ENCODE measurements at regions of chr12 and their contacts with region 1.

Region 1: GRCh38 chr12:126772171-126772864 is 1494.7 kb upstream of the TMEM132C start:
- DNase-seq: peak; percentile 37
- H3K4me3 Mint-ChIP-seq: peak overlapping the region; percentile 62
- H3K27ac Mint-ChIP-seq: peak overlapping the region; percentile 83
- H3K4me1 Mint-ChIP-seq: peaks cover 19% of the 10 kb centered on the region
- H3K27me3 Mint-ChIP-seq: peaks cover 5% of the 10 kb centered on the region

Region 2: GRCh38 chr12:126397071-126397581 is 375.2 kb before region 1 on chr12:
- CTCF ChIA-PET with region 1: no interaction called
- intact Hi-C with region 1: loop called (anchors 1 kb)
- DNase-seq: peak; percentile 22
- H3K4me3 Mint-ChIP-seq: no peak overlapping the region
- H3K27ac Mint-ChIP-seq: no peak overlapping the region
- H3K4me1 Mint-ChIP-seq: peaks cover 11% of the 10 kb centered on the region
- H3K27me3 Mint-ChIP-seq: no peaks in the 10 kb centered on the region

Region 3: DNA sequence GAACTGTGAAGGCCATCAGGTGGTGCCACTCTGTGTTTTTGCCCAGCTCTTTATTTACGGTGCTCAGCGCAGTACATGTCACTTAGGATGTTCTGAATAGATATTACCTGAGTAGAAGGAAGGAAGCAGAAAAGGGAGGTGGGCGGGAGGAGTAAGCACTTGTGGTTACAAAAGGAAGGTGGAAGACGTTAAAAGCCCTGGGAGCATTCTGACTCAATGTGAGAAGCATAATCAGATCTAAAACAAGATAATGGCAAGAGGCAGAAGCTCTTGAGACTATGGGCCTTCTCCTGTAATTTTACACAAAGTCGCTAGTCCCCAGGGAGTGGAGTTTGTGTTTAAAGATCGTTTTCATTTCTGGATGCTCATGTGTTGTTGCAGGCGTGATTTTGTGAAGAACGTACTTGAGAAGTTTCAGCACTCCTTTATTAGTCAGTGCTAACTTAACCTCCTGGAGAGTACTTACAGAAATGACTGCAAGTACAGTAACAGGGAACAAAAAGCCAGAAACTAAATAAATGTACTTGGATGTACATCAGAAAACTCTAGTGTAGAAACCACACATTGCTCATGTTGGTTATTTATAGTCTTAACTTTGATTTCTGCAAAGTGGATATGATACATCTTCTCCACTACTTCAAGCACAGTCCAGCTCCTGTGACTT is 183.6 kb before region 1 on chr12:
- CTCF ChIA-PET with region 1: no interaction called
- intact Hi-C with region 1: loop called (anchors 1 kb)
- DNase-seq: peak; percentile 38
- H3K4me3 Mint-ChIP-seq: no peak overlapping the region
- H3K27ac Mint-ChIP-seq: peak overlapping the region; percentile 62
- H3K4me1 Mint-ChIP-seq: peaks cover 14% of the 10 kb centered on the region
- H3K27me3 Mint-ChIP-seq: no peaks in the 10 kb centered on the region

Region 4: DNA sequence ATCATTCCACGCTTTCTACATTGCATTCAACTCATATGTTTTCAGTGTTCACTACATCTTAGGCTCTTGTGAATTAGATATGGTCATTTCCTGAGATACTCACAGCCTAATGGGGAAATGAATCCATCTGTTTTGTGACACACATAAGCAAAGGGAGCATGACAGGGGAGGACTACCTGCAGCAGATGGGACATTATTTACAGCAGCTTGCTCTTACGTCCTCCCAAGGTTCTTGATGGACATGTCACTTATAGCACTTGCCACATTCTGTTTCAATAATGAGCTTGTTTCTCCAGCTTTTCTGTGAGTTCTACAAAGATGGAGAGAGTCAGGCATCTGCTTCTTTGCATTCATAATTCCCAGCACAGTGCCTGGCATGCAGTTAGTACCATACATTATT is 15.0 kb before region 1 on chr12:
- CTCF ChIA-PET with region 1: no interaction called
- intact Hi-C with region 1: no loop called
- DNase-seq: no peak
- H3K4me3 Mint-ChIP-seq: no peak overlapping the region
- H3K27ac Mint-ChIP-seq: no peak overlapping the region
- H3K4me1 Mint-ChIP-seq: peaks cover 4% of the 10 kb centered on the region
- H3K27me3 Mint-ChIP-seq: peaks cover 2% of the 10 kb centered on the region

Region 5: GRCh38 chr12:127083008-127083949 is 311.0 kb after region 1 on chr12:
- CTCF ChIA-PET with region 1: no interaction called
- intact Hi-C with region 1: loop called (anchors 1 kb)
- DNase-seq: peak; percentile 44
- H3K4me3 Mint-ChIP-seq: no peak overlapping the region
- H3K27ac Mint-ChIP-seq: peak overlapping the region; percentile 31
- H3K4me1 Mint-ChIP-seq: peaks cover 11% of the 10 kb centered on the region
- H3K27me3 Mint-ChIP-seq: peaks cover 5% of the 10 kb centered on the region

Region 6: DNA sequence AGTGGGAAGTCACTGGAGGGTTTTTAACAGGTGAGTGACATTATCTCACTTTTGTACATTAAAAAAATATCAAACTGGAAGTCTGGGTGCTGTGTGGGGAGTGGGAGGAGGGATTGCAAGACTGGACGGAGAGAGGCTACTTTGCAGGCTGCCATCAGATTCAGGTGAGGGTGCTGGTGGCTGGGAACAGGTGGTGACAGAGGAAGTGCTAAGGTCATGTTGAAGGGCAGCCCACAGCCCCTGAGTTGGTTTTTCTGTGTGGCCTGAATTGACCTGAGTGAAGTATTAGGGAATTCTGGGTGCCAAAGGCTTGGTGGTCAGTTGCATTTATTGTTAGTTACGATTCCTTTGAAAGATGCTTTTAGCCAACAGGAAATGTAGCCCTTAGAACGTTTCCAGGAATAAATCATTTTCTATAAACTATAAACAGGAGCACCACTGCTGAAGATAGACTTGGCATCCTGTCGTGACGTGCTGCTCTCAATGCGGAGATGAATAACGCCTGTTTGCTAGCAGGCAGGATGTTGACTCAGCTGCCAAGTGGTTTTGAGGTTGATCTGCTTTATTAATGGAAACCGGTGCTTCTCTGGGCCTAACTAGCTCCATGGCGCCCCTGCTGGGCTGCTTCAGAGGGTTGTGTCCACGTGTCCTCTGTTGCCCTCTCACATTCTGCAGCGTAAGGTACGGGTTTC is 787.2 kb after region 1 on chr12:
- CTCF ChIA-PET with region 1: no interaction called
- intact Hi-C with region 1: loop called (anchors 5 kb)
- DNase-seq: peak; percentile 87
- H3K4me3 Mint-ChIP-seq: no peak overlapping the region
- H3K27ac Mint-ChIP-seq: peak overlapping the region; percentile 89
- H3K4me1 Mint-ChIP-seq: peaks cover 11% of the 10 kb centered on the region
- H3K27me3 Mint-ChIP-seq: peaks cover 12% of the 10 kb centered on the region

Measured in activated naive CD4-positive, alpha-beta T cell treated with anti-CD3 and anti-CD28 coated beads for 36 hours (primary cell).